ENCODE measurements at regions of chr5 and their contacts with region 1.

Region 1: GRCh38 chr5:96344678-96345577 is 88.1 kb downstream of the PCSK1 start:
- DNase-seq: no peak
- ATAC-seq: peak; percentile 90
- H3K4me3 Mint-ChIP-seq: no peak overlapping the region
- H3K27ac Mint-ChIP-seq: no peak overlapping the region
- H3K4me1 Mint-ChIP-seq: peaks cover 11% of the 10 kb centered on the region
- H3K27me3 Mint-ChIP-seq: peaks cover 40% of the 10 kb centered on the region

Region 2: DNA sequence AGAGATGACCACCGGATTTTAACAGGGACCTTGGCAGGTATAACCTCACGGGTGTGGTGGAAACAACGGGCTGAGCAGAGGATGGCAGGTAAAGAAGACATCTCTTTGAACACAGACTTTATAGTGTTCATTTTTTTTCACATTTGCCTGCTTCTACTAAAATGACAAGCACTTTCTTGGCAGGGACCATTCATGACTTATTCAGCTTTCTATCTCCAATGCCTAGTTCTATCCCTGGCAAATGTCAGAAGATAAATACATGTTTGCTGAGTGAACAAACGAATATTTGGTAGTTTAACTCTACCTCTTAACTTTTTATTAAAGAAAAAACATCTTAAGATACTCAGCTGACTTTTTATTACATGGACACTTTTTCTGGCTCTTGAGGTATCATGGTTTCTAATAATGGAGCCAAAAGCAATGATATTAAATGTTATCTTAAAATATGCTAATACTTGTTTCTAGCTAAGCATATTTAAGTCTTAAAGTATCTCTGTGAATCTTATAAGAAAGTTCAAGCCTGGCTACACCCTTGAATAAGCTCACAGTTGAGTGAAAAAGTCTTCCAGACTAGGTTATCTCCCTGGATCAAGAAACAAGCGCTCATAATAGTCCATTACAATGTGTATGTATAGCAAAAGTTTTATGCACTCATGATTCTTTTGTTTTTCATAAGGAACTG is 391.8 kb before region 1 on chr5:
- CTCF ChIA-PET with region 1: no interaction called
- DNase-seq: no peak
- ATAC-seq: no peak
- H3K4me3 Mint-ChIP-seq: no peak overlapping the region
- H3K27ac Mint-ChIP-seq: no peak overlapping the region
- H3K4me1 Mint-ChIP-seq: peaks cover 41% of the 10 kb centered on the region
- H3K27me3 Mint-ChIP-seq: no peaks in the 10 kb centered on the region

Region 3: GRCh38 chr5:96151891-96152290 is 193.0 kb before region 1 on chr5:
- CTCF ChIA-PET with region 1: no interaction called
- DNase-seq: no peak
- ATAC-seq: no peak
- H3K4me3 Mint-ChIP-seq: no peak overlapping the region
- H3K27ac Mint-ChIP-seq: no peak overlapping the region
- H3K4me1 Mint-ChIP-seq: no peaks in the 10 kb centered on the region
- H3K27me3 Mint-ChIP-seq: peaks cover 6% of the 10 kb centered on the region

Region 4: DNA sequence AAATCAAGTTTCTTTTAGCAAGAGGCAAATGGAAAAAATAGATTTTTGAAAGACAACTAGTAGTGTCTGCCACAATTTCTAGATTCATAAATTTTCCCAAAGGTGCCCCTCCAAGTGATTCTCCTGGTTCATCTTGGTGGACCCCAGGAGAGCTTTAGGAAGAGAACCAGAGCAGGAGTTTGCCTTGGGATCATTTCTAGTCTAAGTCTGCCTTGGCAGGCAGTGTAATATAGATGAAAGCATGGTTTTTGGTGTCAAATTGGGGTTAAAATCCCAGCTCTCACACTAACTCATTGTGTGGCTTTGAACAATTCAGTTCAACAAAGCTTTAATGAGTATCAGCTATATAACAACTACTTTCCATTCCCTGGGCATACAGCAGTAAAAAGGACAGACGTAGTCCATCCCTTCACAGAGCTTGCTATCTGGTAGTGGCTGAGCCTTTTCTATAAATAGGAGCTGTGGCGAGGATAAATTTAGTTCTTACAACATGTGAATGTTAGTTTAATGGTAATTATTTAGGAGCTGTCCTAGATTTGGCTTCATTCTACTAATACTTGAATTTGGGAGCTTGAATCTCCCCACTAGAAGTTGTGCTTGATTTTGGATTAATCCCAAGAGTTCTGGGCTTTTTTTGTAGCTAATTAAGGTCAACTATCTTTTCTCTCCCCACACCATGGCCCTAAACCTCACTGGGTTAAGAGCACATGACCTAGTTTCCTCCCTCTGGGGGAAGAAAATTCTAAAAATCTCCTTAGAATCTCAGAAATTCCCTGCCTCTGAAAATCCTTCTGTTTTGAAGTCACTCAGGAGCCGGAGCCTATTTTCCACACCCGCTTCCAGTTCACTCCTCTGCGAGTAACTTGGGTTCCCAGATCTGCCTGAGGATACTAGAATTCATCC is 109.7 kb before region 1 on chr5:
- CTCF ChIA-PET with region 1: no interaction called
- DNase-seq: no peak
- ATAC-seq: no peak
- H3K4me3 Mint-ChIP-seq: no peak overlapping the region
- H3K27ac Mint-ChIP-seq: no peak overlapping the region
- H3K4me1 Mint-ChIP-seq: no peaks in the 10 kb centered on the region
- H3K27me3 Mint-ChIP-seq: peaks cover 22% of the 10 kb centered on the region

Region 5: DNA sequence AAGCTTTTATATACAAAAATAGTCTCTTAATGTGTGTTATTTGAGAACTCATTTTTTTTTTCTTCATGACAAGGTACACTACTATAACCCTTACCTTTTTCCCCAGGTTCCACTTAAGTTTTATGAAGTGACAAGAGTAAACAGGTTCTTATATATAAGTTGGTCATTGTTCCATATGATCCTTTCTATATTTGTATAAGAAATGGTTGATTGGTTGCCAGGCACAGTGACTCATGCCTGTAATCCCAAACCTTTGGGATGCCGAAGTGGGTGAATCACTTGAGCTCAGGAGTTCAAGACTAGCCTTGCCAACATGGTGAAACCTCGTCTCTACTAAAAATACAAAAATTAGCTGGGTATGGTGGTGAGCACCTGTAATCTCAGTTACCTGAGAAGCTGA is 20.2 kb before region 1 on chr5:
- CTCF ChIA-PET with region 1: no interaction called
- DNase-seq: no peak
- ATAC-seq: no peak
- H3K4me3 Mint-ChIP-seq: no peak overlapping the region
- H3K27ac Mint-ChIP-seq: no peak overlapping the region
- H3K4me1 Mint-ChIP-seq: no peaks in the 10 kb centered on the region
- H3K27me3 Mint-ChIP-seq: peaks cover 9% of the 10 kb centered on the region

Region 6: DNA sequence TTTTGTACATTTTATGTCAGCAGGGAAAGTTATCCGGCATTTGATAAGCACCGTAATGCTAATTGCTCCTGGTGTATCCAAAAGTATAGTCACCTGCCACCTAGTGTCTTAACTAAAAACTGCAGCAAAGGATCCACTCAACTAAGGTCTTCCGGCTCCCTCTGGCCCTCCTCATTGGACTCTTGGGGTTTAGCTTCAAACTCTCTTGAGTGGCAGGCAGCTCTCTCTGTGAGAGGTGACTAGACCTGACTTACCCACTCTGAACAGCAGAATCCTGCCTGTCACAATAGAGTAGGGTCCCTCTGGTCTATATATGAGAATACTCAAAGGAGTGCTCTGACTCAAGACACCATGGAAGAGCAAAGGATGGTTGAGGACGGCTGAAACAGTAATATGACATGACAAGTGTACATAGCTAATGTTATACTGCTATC is 256.9 kb after region 1 on chr5:
- CTCF ChIA-PET with region 1: interaction called, 49 read pairs
- DNase-seq: peak; percentile 64
- ATAC-seq: peak; percentile 76
- H3K4me3 Mint-ChIP-seq: no peak overlapping the region
- H3K27ac Mint-ChIP-seq: no peak overlapping the region
- H3K4me1 Mint-ChIP-seq: peaks cover 2% of the 10 kb centered on the region
- H3K27me3 Mint-ChIP-seq: peaks cover 28% of the 10 kb centered on the region